ENCODE measurements at regions of chr6 and their contacts with region 1.

Region 1: GRCh38 chr6:35688581-35689322 is at the start of gene FKBP5:
- DNase-seq: peak; percentile 87
- H3K4me3 Mint-ChIP-seq: peak within 1 kb of the TSS; percentile 97
- H3K27ac Mint-ChIP-seq: peak within 1 kb of the TSS; percentile 95
- H3K4me1 Mint-ChIP-seq: peaks cover 24% of the 10 kb centered on the region
- H3K27me3 Mint-ChIP-seq: peaks cover 2% of the 10 kb centered on the region
- total RNA-seq, gene FKBP5: 60.9 and 62.4 TPM in 2 replicates

Region 2: GRCh38 chr6:35500782-35501181 is 188.0 kb before region 1 on chr6:
- intact Hi-C with region 1: no loop called
- DNase-seq: no peak
- H3K4me3 Mint-ChIP-seq: no peak overlapping the region
- H3K27ac Mint-ChIP-seq: no peak overlapping the region
- H3K4me1 Mint-ChIP-seq: no peaks in the 10 kb centered on the region
- H3K27me3 Mint-ChIP-seq: peaks cover 32% of the 10 kb centered on the region

Region 3: GRCh38 chr6:35583893-35584688 is 104.7 kb before region 1 on chr6:
- intact Hi-C with region 1: loop called (anchors 2 kb)
- DNase-seq: peak; percentile 54
- H3K4me3 Mint-ChIP-seq: no peak overlapping the region
- H3K27ac Mint-ChIP-seq: no peak overlapping the region
- H3K4me1 Mint-ChIP-seq: peaks cover 44% of the 10 kb centered on the region
- H3K27me3 Mint-ChIP-seq: no peaks in the 10 kb centered on the region

Region 4: GRCh38 chr6:35601331-35602132 is 87.2 kb before region 1 on chr6:
- intact Hi-C with region 1: loop called (anchors 2 kb)
- DNase-seq: peak; percentile 57
- H3K4me3 Mint-ChIP-seq: peak overlapping the region; percentile 80
- H3K27ac Mint-ChIP-seq: peak overlapping the region; percentile 89
- H3K4me1 Mint-ChIP-seq: peaks cover 62% of the 10 kb centered on the region
- H3K27me3 Mint-ChIP-seq: no peaks in the 10 kb centered on the region

Region 5: GRCh38 chr6:35710241-35710847 is 21.6 kb after region 1 on chr6:
- intact Hi-C with region 1: loop called (anchors 1 kb)
- DNase-seq: no peak
- H3K4me3 Mint-ChIP-seq: peak overlapping the region; percentile 50
- H3K27ac Mint-ChIP-seq: peak overlapping the region; percentile 82
- H3K4me1 Mint-ChIP-seq: peaks cover 50% of the 10 kb centered on the region
- H3K27me3 Mint-ChIP-seq: no peaks in the 10 kb centered on the region

Region 6: DNA sequence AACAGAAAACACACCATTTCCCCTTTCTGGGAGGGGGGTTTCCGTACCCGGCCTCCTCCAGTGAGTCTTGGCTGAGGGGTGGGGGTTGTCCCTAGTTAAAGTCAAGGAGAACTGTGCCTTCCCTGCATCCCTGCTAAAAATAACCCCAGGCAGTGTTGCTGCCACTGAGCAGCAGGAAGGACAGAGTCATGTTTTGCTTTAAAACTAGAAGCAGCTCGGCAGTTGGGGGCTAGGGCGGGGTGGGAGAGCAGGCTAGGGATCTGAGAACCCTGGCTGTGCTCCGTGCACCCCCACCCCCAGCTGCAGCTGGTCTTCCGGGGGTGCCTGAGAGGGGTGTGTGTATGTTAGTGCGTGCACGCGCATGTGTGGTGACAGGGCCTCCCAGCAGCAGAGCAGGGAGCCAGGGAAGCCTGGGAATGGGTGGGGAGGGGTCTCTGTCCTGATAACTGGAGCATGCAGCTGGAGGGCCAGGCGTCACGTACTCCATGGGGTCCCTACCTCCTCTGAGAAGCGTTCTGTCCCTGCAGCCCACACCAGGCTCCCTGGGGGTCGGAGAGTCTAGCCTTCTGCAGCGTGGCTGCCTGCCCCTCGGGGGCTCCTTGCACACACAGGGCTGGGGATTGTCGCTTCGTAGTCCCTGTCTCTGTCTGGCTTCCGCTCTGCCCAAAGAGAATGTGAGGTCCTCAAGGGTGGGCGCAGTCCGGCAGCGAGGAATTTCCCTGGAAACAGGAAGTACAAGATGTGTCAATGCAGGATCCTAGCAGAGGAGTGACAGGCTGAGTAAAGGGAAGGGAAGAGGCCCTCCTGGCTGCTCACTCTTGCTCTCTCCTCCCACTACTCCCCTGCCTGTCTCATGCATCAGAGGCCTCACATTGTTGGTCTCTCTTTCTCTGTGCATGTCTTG is 31.3 kb after region 1 on chr6:
- intact Hi-C with region 1: loop called (anchors 2 kb)
- DNase-seq: no peak
- H3K4me3 Mint-ChIP-seq: peak overlapping the region; percentile 55
- H3K27ac Mint-ChIP-seq: peak overlapping the region; percentile 86
- H3K4me1 Mint-ChIP-seq: peaks cover 62% of the 10 kb centered on the region
- H3K27me3 Mint-ChIP-seq: peaks cover 3% of the 10 kb centered on the region